BJ (cell line): ENCODE measurements at regions of chr2 and their contacts with region 1.

Region 1: DNA sequence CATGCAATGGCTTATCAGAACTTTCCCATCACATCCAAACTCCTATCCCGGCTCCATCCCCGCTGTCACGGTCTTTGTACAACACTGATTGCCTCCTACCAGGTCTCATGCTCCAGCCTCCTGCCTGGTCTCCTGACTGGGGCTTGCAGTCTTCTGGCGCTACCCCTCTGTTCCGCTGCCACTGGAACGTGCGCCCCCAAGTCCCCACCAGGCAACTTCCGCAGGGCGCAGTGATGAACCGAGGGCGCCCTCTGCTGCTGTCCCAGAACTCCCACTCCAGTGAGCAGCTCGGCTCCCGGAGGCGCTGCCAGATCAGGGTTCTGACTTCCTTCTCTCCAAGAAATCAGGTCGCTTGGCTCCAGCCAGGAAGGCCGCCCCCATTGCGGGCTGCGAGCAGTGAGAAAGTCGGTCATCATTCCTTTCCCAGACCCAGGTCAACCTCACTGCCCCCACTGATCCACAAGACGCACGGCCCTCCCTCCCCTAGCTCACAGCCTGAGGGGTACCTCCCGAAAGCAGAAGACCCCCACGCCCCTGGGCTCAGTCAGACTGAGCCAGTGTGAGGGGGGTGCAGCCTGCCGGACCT is 43.9 kb upstream of the RAB11FIP5 start:
- DNase-seq: no peak
- H3K4me3 ChIP-seq: no peak overlapping the region
- H3K27me3 ChIP-seq: peaks cover 6% of the 10 kb centered on the region
- CTCF ChIP-seq: peak; percentile 94

Region 2: GRCh38 chr2:72999729-73000725 is 156.6 kb before region 1 on chr2:
- CTCF ChIA-PET with region 1: interaction called, 17 read pairs
- POLR2A ChIA-PET with region 1: no interaction called
- DNase-seq: no peak
- H3K4me3 ChIP-seq: no peak overlapping the region
- H3K27me3 ChIP-seq: no peaks in the 10 kb centered on the region
- CTCF ChIP-seq: no peak

Region 3: GRCh38 chr2:73053316-73054114 is 103.1 kb before region 1 on chr2:
- CTCF ChIA-PET with region 1: no interaction called
- POLR2A ChIA-PET with region 1: no interaction called
- DNase-seq: peak; percentile 19
- H3K4me3 ChIP-seq: no peak overlapping the region
- H3K27me3 ChIP-seq: no peaks in the 10 kb centered on the region
- CTCF ChIP-seq: no peak

Region 4: GRCh38 chr2:73063909-73064875 is 92.4 kb before region 1 on chr2:
- CTCF ChIA-PET with region 1: interaction called, 12 read pairs
- POLR2A ChIA-PET with region 1: no interaction called
- DNase-seq: peak; percentile 34
- H3K4me3 ChIP-seq: no peak overlapping the region
- H3K27me3 ChIP-seq: no peaks in the 10 kb centered on the region
- CTCF ChIP-seq: no peak

Region 5: DNA sequence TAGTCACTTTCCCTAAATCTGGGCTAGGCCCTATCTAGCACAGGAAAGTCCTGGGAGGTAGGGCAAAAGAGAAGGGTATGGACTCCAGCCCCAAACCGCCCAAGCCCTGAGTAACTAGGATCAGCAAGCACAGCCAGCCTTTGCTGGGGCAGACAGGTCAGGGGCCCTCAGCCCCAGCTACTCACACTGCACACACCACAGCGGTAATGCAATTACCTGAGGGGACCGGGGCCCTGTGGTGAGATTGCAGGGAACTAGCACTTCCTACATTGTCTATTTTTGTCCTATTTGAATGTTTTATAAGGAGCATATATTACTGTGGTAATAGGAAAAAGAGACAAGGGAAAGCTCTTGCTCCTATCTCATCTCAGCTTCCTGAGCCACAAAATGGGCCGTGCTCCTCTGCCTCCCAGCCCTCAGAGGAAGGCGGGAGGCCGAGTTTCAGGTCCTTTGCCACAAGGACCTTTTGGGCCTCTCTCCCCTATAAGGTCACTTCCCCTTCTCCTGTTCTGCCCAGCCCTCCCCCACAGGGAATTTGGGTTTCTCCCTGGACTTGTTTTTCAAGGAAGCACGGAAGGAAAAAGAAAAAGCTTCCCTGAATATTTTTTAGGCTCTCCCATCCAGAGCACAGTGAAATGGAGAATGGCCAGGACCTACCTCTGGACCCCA is 64.4 kb before region 1 on chr2:
- CTCF ChIA-PET with region 1: interaction called, 326 read pairs
- POLR2A ChIA-PET with region 1: no interaction called
- DNase-seq: no peak
- H3K4me3 ChIP-seq: no peak overlapping the region
- H3K27me3 ChIP-seq: no peaks in the 10 kb centered on the region
- CTCF ChIP-seq: no peak

Region 6: GRCh38 chr2:73142937-73143336 is 13.7 kb before region 1 on chr2:
- CTCF ChIA-PET with region 1: interaction called, 11 read pairs
- POLR2A ChIA-PET with region 1: no interaction called
- DNase-seq: no peak
- H3K4me3 ChIP-seq: no peak overlapping the region
- H3K27me3 ChIP-seq: no peaks in the 10 kb centered on the region
- CTCF ChIP-seq: no peak